ENCODE measurements at regions of chr1 and their contacts with region 1.

Region 1: GRCh38 chr1:162612606-162613400 is 19.5 kb upstream of the DDR2 start:
- DNase-seq: peak; percentile 33
- H3K4me3 ChIP-seq: no peak overlapping the region
- H3K27ac ChIP-seq: no peak overlapping the region
- H3K4me1 ChIP-seq: no peaks in the 10 kb centered on the region
- H3K27me3 ChIP-seq: no peaks in the 10 kb centered on the region
- CTCF ChIP-seq: no peak
- POLR2A ChIP-seq: no peak

Region 2: GRCh38 chr1:162627662-162628296 is 15.0 kb after region 1 on chr1:
- CTCF ChIA-PET with region 1: interaction called, 22 read pairs
- POLR2A ChIA-PET with region 1: interaction called, 10 read pairs
- dilution Hi-C with region 1: no loop called
- intact Hi-C with region 1: no loop called
- DNase-seq: peak; percentile 48
- H3K4me3 ChIP-seq: no peak overlapping the region
- H3K27ac ChIP-seq: no peak overlapping the region
- H3K4me1 ChIP-seq: peaks cover 34% of the 10 kb centered on the region
- H3K27me3 ChIP-seq: no peaks in the 10 kb centered on the region
- CTCF ChIP-seq: peak; percentile 47 to 51
- POLR2A ChIP-seq: no peak

Region 3: GRCh38 chr1:162633081-162633762 is 20.4 kb after region 1 on chr1:
- CTCF ChIA-PET with region 1: interaction called, 22 read pairs
- POLR2A ChIA-PET with region 1: interaction called, 10 read pairs
- dilution Hi-C with region 1: no loop called
- intact Hi-C with region 1: no loop called
- DNase-seq: peak; percentile 75
- H3K4me3 ChIP-seq: peak overlapping the region; percentile 51 to 94 (median 81)
- H3K27ac ChIP-seq: peak overlapping the region; percentile 69
- H3K4me1 ChIP-seq: peaks cover 58% of the 10 kb centered on the region
- H3K27me3 ChIP-seq: no peaks in the 10 kb centered on the region
- CTCF ChIP-seq: peak in 1 of 2 donors; percentile 36
- POLR2A ChIP-seq: peak; percentile 25

Region 4: DNA sequence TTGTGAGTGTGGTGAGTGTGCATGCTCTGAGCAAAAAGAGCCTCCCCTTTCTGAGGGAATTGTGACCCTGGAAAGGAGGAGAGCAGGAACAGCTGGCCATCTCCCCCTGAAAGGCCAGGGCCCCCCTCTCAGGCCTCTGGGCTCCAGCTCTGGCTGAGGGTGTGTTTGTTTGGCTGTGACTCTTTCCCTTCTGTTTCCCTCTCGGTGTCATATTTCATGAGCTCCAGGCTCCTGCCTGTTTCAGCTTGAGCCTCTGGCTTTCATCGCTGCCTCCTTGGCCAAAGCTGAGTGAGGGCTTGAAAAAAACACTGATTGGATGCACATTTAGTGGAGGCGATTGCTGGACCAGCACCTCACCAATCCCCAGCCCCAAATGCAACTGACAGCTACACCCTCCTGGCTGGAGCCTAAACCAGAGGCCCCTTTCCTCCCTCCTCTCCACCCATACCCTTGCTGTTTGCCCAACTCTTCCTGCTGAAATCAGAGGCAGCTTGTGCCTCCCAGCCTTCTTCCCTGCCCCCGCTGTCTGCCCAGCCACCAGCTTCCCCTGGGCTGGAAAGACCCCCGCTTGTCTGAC is 83.6 kb after region 1 on chr1:
- CTCF ChIA-PET with region 1: interaction called, 14 read pairs
- POLR2A ChIA-PET with region 1: no interaction called
- dilution Hi-C with region 1: no loop called
- intact Hi-C with region 1: no loop called
- DNase-seq: peak; percentile 92
- H3K4me3 ChIP-seq: no peak overlapping the region
- H3K27ac ChIP-seq: peak overlapping the region; percentile 36
- H3K4me1 ChIP-seq: peaks cover 27% of the 10 kb centered on the region
- H3K27me3 ChIP-seq: no peaks in the 10 kb centered on the region
- CTCF ChIP-seq: no peak
- POLR2A ChIP-seq: no peak

Region 5: GRCh38 chr1:163321311-163322305 is 708.8 kb after region 1 on chr1 and contains the start of gene NUF2:
- CTCF ChIA-PET with region 1: no interaction called
- POLR2A ChIA-PET with region 1: no interaction called
- dilution Hi-C with region 1: no loop called
- intact Hi-C with region 1: loop called (anchors 10 kb)
- DNase-seq: peak; percentile 98
- H3K4me3 ChIP-seq: peak within 1 kb of the TSS; percentile 56 to 98 (median 93)
- H3K27ac ChIP-seq: peak within 1 kb of the TSS; percentile 71
- H3K4me1 ChIP-seq: peaks cover 23% of the 10 kb centered on the region
- H3K27me3 ChIP-seq: no peaks in the 10 kb centered on the region
- CTCF ChIP-seq: no peak
- POLR2A ChIP-seq: peak; percentile 84
- total RNA-seq, gene NUF2: 38.6 and 38.7 TPM in 2 replicates